Panc1 (cell line): ENCODE measurements at regions of chr5 and their contacts with region 1.

Region 1: GRCh38 chr5:129125810-129126209 is 31.3 kb downstream of the ISOC1 start:
- DNase-seq: no peak
- ATAC-seq: no peak
- H3K4me3 ChIP-seq: no peak overlapping the region
- H3K27ac ChIP-seq: no peak overlapping the region
- H3K4me1 ChIP-seq: no peaks in the 10 kb centered on the region
- H3K27me3 ChIP-seq: no peaks in the 10 kb centered on the region
- CTCF ChIP-seq: no peak

Region 2: GRCh38 chr5:128905571-128906110 is 220.2 kb before region 1 on chr5:
- CTCF ChIA-PET with region 1: no interaction called
- POLR2A ChIA-PET with region 1: no interaction called
- in situ Hi-C with region 1: no loop called
- intact Hi-C with region 1: loop called (anchors 10 kb)
- DNase-seq: peak; percentile 25
- ATAC-seq: peak; percentile 85
- H3K4me3 ChIP-seq: no peak overlapping the region
- H3K27ac ChIP-seq: no peak overlapping the region
- H3K4me1 ChIP-seq: no peaks in the 10 kb centered on the region
- H3K27me3 ChIP-seq: no peaks in the 10 kb centered on the region
- CTCF ChIP-seq: peak; percentile 79; the same call in 1 of the 2 replicates